PC-3 (cell line): ENCODE measurements at regions of chr10 and their contacts with region 1.

Region 1: GRCh38 chr10:76858721-76859120 is 778.9 kb downstream of the KCNMA1 start:
- DNase-seq: no peak
- ATAC-seq: no peak
- H3K4me3 ChIP-seq: no peak overlapping the region
- H3K27ac ChIP-seq: no peak overlapping the region
- H3K4me1 ChIP-seq: no peaks in the 10 kb centered on the region
- H3K27me3 ChIP-seq: peaks cover 56% of the 10 kb centered on the region
- CTCF ChIP-seq: no peak

Region 2: DNA sequence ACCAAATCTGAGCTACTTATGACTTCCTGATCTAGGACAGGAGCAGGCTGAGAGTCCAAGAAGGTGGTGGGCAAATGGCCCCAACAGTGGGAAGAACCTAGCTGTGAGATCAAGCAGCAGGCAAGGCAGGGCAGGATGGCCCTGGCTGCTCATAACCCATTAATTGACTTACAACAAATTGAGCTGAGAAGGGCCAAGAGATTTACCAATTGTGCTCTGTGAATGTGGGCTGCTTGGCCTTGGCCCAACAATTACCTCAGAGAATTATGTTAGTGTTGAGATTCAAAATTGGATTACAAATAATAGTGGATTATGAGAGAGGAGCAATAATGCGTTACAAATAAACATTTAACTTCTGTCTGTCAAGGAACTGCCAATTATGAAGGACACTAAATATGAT is 177.6 kb before region 1 on chr10:
- CTCF ChIA-PET with region 1: no interaction called
- POLR2A ChIA-PET with region 1: no interaction called
- intact Hi-C with region 1: no loop called
- DNase-seq: no peak
- ATAC-seq: no peak
- H3K4me3 ChIP-seq: no peak overlapping the region
- H3K27ac ChIP-seq: no peak overlapping the region
- H3K4me1 ChIP-seq: no peaks in the 10 kb centered on the region
- H3K27me3 ChIP-seq: peaks cover 52% of the 10 kb centered on the region
- CTCF ChIP-seq: no peak

Region 3: GRCh38 chr10:76839276-76839675 is 19.4 kb before region 1 on chr10:
- CTCF ChIA-PET with region 1: no interaction called
- POLR2A ChIA-PET with region 1: interaction called, 14 read pairs
- intact Hi-C with region 1: no loop called
- DNase-seq: no peak
- ATAC-seq: no peak
- H3K4me3 ChIP-seq: no peak overlapping the region
- H3K27ac ChIP-seq: no peak overlapping the region
- H3K4me1 ChIP-seq: no peaks in the 10 kb centered on the region
- H3K27me3 ChIP-seq: peaks cover 58% of the 10 kb centered on the region
- CTCF ChIP-seq: no peak